Motor neuron (in vitro differentiated cells): ENCODE measurements at regions of chr13 and their contacts with region 1.

Region 1: GRCh38 chr13:102845630-102846260 is at the start of gene ERCC5:
- ATAC-seq: peak; percentile 85 to 93 (median 91)
- H3K4me3 ChIP-seq: peak within 1 kb of the TSS; percentile 62 to 91 (median 81)
- H3K27ac ChIP-seq: peak within 1 kb of the TSS; percentile 87 to 95
- H3K4me1 ChIP-seq: peaks cover 4 to 5% of the 10 kb centered on the region in 2 donors
- total RNA-seq, gene ERCC5: 40.2 to 83.3 (median 57.7) TPM

Region 2: DNA sequence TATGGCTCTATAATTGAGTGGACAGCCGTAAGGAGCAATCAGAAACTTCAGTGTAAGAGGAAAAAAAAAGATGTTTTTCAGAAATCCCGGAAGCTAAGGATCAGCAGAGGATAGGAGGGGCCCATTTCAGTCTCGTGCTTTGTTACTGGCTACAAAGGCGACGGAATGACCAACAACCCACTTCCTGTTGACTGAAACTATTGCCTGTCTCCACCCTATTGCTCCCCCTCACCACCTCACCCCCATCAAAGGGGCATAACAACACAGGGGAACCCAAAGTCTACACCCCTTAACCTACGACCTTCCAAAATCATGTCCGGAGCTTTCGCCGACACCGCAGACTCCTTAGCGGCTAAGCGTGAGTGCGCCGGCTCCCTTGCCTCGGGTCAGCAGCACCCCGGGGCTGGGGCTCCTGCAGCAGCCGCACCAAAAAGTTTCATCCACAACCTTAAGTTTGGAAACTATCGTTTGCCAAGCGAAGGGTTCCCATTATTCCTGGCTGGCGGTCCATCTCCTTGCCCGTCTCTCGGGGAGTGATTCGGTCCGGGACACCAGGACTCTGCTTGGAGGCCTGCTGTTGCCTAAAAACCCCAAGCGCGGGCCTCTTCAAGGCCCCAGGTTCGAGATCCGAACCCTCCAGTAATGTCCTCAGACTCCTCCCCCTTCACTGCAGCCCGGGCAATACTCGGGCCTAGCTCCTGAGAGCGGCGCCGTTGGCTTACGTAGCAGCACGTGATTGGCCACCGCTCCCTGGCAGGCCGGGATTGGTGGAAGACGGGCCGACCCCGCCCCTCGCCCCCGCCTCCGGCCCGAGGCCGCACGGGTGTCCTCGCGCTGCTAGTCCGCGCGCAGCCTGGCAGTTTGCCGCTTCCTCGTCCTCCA is 249.4 kb before region 1 on chr13 and contains the start of gene TPP2:
- in situ Hi-C with region 1: loop called in 8 of 9 experiments (anchors 25 kb)
- ATAC-seq: peak; percentile 84 to 92 (median 92)
- H3K4me3 ChIP-seq: peak within 1 kb of the TSS; percentile 65 to 99 (median 88)
- H3K27ac ChIP-seq: peak within 1 kb of the TSS; percentile 81 to 88
- H3K4me1 ChIP-seq: peaks cover 16 to 19% of the 10 kb centered on the region in 2 donors
- total RNA-seq, gene TPP2: 22.0 to 70.8 (median 38.0) TPM